PC-9 (cell line): ENCODE measurements at regions of chr5 and their contacts with region 1.

Region 1: DNA sequence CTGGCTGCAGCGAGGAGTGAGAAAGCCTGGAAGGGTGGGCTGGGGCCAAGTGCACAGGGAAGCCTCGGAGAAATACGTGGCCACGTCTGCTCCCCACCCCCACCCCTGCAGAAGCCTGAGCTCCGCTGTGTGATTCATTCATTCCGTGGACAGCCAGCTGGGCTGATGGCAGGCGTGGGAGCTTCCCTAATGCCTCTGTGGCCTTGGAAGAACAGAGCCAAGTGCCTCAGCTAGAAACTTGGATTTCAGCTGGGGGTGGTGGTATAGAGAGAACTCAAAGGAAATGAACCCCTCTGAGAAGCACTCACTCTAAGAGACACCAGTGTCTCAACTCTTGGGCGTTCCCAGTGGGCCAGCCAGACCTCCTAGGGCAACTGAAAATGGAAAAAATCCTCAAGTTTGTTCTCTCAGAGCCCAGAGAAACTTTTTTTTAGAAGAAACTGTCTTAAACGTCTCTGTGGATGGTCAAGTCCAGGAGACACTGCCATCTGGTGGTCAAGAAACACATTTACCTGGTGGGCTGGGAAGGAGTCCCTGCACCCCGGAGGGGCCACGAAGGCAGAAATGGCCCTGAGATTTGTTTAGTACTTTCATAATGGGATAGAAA is 18.0 kb downstream of the ATOX1 start:
- DNase-seq: peak; percentile 46 to 49
- H3K4me3 ChIP-seq: no peak overlapping the region
- H3K27ac ChIP-seq: no peak overlapping the region
- H3K4me1 ChIP-seq: peaks cover 32% of the 10 kb centered on the region
- H3K27me3 ChIP-seq: no peaks in the 10 kb centered on the region
- CTCF ChIP-seq: peak; percentile 92

Region 2: GRCh38 chr5:151447174-151448037 is 293.0 kb before region 1 on chr5 and contains the start of gene SLC36A1:
- CTCF ChIA-PET with region 1: interaction called, 5 read pairs
- POLR2A ChIA-PET with region 1: no interaction called
- intact Hi-C with region 1: loop called (anchors 1 kb)
- DNase-seq: peak; percentile 71 to 89
- H3K4me3 ChIP-seq: peak within 1 kb of the TSS; percentile 70
- H3K27ac ChIP-seq: no peak within 1 kb of the TSS
- H3K4me1 ChIP-seq: peaks cover 7% of the 10 kb centered on the region
- H3K27me3 ChIP-seq: no peaks in the 10 kb centered on the region
- CTCF ChIP-seq: peak; percentile 93
- total RNA-seq, gene SLC36A1: 7.4 and 11.0 TPM in 2 replicates

Region 3: DNA sequence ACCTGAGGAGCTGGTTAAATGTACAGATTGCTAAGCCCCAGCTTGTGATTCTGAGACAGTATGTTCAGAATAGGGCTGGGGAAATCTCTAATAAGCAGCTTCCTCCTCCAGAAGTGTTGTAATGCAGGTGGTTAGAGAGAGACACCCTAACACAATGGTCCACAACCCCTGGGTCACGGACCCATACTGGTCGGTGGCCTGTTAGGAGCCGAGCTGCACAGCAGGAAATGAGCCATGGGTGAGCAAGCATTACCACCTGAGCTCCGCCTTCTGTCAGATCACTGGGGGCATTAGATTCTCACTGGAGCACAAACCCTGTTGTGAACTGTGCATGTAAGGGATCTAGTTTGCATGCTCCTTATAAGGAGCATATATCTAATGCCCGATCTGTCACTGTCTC is 231.2 kb before region 1 on chr5:
- CTCF ChIA-PET with region 1: no interaction called
- POLR2A ChIA-PET with region 1: no interaction called
- intact Hi-C with region 1: loop called (anchors 5 kb)
- DNase-seq: peak; percentile 46 to 60
- H3K4me3 ChIP-seq: no peak overlapping the region
- H3K27ac ChIP-seq: peak overlapping the region; percentile 37; the same call in 1 of the 2 replicates
- H3K4me1 ChIP-seq: peaks cover 20% of the 10 kb centered on the region
- H3K27me3 ChIP-seq: no peaks in the 10 kb centered on the region
- CTCF ChIP-seq: no peak

Region 4: GRCh38 chr5:151709109-151709735 is 31.2 kb before region 1 on chr5:
- CTCF ChIA-PET with region 1: interaction called, 3 read pairs
- POLR2A ChIA-PET with region 1: interaction called, 30 read pairs
- intact Hi-C with region 1: no loop called
- DNase-seq: no peak
- H3K4me3 ChIP-seq: no peak overlapping the region
- H3K27ac ChIP-seq: no peak overlapping the region
- H3K4me1 ChIP-seq: no peaks in the 10 kb centered on the region
- H3K27me3 ChIP-seq: no peaks in the 10 kb centered on the region
- CTCF ChIP-seq: no peak

Region 5: GRCh38 chr5:151771259-151772028 is 31.0 kb after region 1 on chr5 and contains the start of gene G3BP1:
- CTCF ChIA-PET with region 1: interaction called, 5 read pairs
- POLR2A ChIA-PET with region 1: interaction called, 8 read pairs
- intact Hi-C with region 1: loop called (anchors 1 kb)
- DNase-seq: peak; percentile 100
- H3K4me3 ChIP-seq: peak within 1 kb of the TSS; percentile 92
- H3K27ac ChIP-seq: peak within 1 kb of the TSS; percentile 97
- H3K4me1 ChIP-seq: peaks cover 34% of the 10 kb centered on the region
- H3K27me3 ChIP-seq: no peaks in the 10 kb centered on the region
- CTCF ChIP-seq: no peak; the same call in 1 of the 2 replicates
- total RNA-seq, gene G3BP1: 203 and 254 TPM in 2 replicates